Adrenal gland (tissue), 19 donors: ENCODE measurements at regions of chr1 and their contacts with region 1.

Region 1: GRCh38 chr1:209747580-209748262 is 8.1 kb upstream of the TRAF3IP3 start:
- DNase-seq: peak; percentile 94 to 99 (median 99)
- H3K4me3 ChIP-seq: peak overlapping the region in 1 of 4 donors; percentile 21
- H3K27ac ChIP-seq: peak overlapping the region in 2 of 5 donors; percentile 38 to 39
- H3K4me1 ChIP-seq: peaks cover 0 to 5% of the 10 kb centered on the region in 2 donors
- H3K27me3 ChIP-seq: no peaks in the 10 kb centered on the region
- CTCF ChIP-seq: peak; percentile 89 to 100 (median 98)
- POLR2A ChIP-seq: no peak

Region 2: DNA sequence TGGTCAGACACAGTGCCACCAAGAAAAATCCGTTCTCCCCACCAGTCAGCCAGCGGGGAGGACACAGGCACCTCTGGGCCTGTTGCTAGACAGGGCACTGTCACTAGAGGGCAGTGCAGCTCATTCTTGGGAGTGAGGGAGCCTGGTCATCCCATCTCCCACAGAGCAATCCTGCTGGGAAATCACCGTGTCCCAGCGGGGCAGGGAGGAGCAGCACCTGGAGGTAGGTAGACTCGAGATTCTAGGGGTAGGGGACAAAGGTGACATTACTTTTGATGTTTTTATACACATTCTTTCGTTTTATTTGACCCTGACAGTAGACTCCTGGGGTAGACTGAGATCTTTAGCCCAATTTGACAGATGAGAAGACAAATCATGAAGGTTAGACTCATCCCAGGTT is 170.9 kb before region 1 on chr1:
- intact Hi-C with region 1: loop called in 1 of 2 experiments (anchors 5 kb)
- DNase-seq: peak; percentile 79 to 93 (median 87)
- H3K4me3 ChIP-seq: no peak overlapping the region
- H3K27ac ChIP-seq: peak overlapping the region in 1 of 5 donors; percentile 46
- H3K4me1 ChIP-seq: peaks cover 0 to 5% of the 10 kb centered on the region in 2 donors
- H3K27me3 ChIP-seq: peaks cover 3% of the 10 kb centered on the region
- CTCF ChIP-seq: peak; percentile 87 to 96 (median 94)
- POLR2A ChIP-seq: no peak

Region 3: DNA sequence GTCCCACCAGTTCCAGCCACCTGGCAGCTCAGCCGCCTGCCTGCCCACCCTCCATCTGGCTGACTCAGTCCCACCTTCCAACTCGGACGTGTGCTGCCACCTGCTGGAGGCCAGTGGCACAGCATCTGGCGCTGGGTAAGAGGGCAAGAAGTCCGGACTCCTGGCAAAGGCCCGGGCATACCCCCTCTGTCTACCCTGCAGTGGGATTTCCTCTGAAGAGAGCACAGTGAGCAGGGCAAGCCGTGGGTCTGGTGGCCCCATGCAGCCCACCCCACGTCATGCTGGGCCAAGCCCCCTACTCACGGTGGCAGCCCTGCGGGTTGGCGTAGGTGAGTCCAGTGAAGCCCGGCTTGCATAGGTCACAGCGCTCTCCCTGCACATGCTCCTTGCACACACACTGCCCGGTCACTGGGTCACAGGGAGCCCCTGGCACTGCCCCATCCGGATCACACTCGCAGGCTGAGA is 120.0 kb before region 1 on chr1:
- intact Hi-C with region 1: loop called in 1 of 2 experiments (anchors 10 kb)
- DNase-seq: peak; percentile 64 to 89 (median 80)
- H3K4me3 ChIP-seq: no peak overlapping the region
- H3K27ac ChIP-seq: no peak overlapping the region
- H3K4me1 ChIP-seq: peaks cover 0 to 17% of the 10 kb centered on the region in 2 donors
- H3K27me3 ChIP-seq: no peaks in the 10 kb centered on the region
- CTCF ChIP-seq: peak; percentile 91 to 98 (median 93)
- POLR2A ChIP-seq: no peak